A549 (cell line): ENCODE measurements at regions of chr14 and their contacts with region 1.

Region 1: DNA sequence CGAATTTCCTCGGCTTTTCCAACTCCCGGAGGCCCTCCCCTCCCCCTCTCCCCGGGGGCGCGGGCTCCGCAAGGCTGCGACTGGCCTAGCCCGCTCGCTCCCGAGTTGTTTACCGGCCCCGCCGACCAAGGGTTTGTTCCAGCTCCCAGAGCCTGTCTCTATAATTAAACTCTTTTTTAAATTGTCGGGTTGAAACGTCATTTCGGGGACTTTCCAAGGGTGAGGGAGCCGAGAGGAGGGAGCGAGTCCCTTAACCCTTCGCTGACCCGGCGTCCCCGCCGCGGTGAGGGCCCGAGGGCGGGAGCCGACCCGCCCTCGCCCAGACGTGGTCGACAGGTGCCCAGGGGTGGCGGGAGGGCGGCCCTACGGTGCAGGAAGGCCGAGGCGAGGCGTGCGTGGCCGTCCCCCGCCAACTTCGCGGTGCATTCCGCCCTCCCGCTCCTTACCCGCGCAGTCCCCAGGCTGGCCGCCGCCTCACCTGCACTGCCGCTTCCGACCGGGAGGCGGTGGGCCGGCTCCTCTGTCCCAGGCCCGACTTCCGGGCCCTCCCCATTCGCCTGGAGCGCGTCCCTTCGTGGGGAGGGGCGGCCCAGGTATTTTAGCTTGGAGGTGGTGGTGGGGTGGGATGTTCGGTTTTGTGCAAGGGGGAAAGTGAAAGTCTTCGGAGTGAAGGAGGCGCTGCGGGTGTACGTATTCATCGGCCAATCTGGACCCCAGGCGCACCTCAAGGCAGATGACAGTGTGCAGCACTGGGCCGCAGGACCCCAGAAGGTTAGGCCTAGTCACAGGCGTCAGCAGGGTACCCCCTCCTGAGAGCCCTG is 2.9 kb upstream of the ZFP36L1 start:
- DNase-seq: peak in 1 of 2 experiments; percentile 90
- ATAC-seq: peak; percentile 60 to 75
- H3K4me3 ChIP-seq: peak overlapping the region; percentile 95
- H3K27ac ChIP-seq: peak overlapping the region; percentile 99 to 100
- H3K4me1 ChIP-seq: peaks cover 21% of the 10 kb centered on the region
- CTCF ChIP-seq: peak; percentile 38; the same call in 2 of the 3 replicates
- EP300 ChIP-seq: no peak; a peak in 1 of 5 replicates
- POLR2A ChIP-seq: peak; percentile 83
- RAD21 ChIP-seq: no peak; a peak in 4 of 5 replicates

Region 2: GRCh38 chr14:68089146-68089731 is 706.6 kb before region 1 on chr14:
- CTCF ChIA-PET with region 1: no interaction called
- POLR2A ChIA-PET with region 1: interaction called, 11 read pairs
- DNase-seq: peak; percentile 67 to 88
- ATAC-seq: peak; percentile 95 to 97
- H3K4me3 ChIP-seq: no peak overlapping the region
- H3K27ac ChIP-seq: peak overlapping the region; percentile 83
- H3K4me1 ChIP-seq: peaks cover 23% of the 10 kb centered on the region
- CTCF ChIP-seq: no peak
- EP300 ChIP-seq: no peak
- POLR2A ChIP-seq: no peak
- RAD21 ChIP-seq: no peak

Region 3: DNA sequence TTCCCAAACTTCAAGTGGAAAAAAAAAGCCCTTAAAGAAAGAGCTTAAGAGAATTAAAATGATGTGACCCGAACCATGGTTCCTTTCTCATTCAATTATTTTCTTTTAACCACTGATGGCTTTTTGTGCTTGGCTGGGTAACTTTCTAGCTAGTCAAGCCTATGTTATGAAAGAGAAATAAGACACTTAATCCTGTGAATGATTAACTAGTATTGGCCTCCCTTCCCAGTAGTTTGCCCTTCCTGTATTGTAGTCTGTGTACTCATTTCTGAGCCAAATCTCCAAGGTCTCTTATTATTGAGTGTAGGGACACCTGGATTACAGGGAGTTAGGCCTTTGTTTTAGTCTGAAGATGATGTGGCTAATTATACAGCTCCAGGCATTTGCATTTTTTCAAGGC is 623.2 kb before region 1 on chr14:
- CTCF ChIA-PET with region 1: no interaction called
- POLR2A ChIA-PET with region 1: interaction called, 18 read pairs
- DNase-seq: peak; percentile 65 to 93
- ATAC-seq: peak; percentile 92 to 94
- H3K4me3 ChIP-seq: no peak overlapping the region
- H3K27ac ChIP-seq: peak overlapping the region; percentile 88 to 94
- H3K4me1 ChIP-seq: peaks cover 73% of the 10 kb centered on the region
- CTCF ChIP-seq: no peak
- EP300 ChIP-seq: peak; percentile 30 to 45; a peak in 2 of 5 replicates
- POLR2A ChIP-seq: no peak
- RAD21 ChIP-seq: peak; percentile 15 to 35; a peak in 4 of 5 replicates

Region 4: GRCh38 chr14:68248481-68249255 is 547.1 kb before region 1 on chr14:
- CTCF ChIA-PET with region 1: interaction called, 117 read pairs
- POLR2A ChIA-PET with region 1: interaction called, 142 read pairs
- DNase-seq: peak; percentile 61 to 86
- ATAC-seq: peak; percentile 81 to 84
- H3K4me3 ChIP-seq: no peak overlapping the region
- H3K27ac ChIP-seq: peak overlapping the region; percentile 95 to 97
- H3K4me1 ChIP-seq: peaks cover 76% of the 10 kb centered on the region
- CTCF ChIP-seq: peak; percentile 83
- EP300 ChIP-seq: no peak
- POLR2A ChIP-seq: no peak
- RAD21 ChIP-seq: peak; percentile 93 to 97

Region 5: DNA sequence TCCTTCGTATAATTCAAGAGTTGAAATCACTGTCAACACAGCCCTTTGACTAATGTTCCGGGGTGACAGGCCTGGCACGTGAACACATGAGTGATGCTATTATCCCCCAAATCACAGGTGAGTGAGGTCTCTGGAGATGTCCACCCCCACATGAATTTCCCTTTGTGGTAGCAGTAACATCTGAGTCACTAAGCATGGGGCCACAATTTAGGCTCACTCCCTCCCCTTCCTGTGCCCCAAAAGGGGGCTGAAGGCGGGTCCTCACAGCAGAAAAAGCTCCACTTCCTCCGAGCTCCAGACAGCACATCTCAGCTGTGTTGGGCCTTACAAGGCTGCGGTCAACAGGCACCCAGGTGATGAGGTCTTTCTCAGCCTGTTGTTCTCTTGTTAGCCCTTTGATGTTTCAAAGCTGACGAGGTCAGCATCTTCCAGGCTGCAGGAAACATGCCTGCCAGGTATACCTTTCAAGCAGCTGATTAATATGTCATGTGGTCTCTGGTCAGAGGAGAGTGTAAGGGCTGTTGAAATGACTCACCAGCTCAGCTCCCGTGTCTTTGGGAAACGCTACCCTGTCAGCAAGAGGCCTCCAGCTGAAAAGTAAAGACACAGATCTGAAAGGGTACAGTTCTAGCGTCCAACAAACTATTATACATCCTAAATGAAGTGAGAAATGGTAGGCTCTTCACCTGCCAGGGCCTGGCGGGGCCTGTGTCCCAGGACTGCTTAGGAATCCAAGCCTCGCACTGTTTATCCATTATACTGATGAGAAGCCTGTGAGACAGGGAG is 110.2 kb before region 1 on chr14:
- CTCF ChIA-PET with region 1: no interaction called
- POLR2A ChIA-PET with region 1: interaction called, 16 read pairs
- DNase-seq: no peak
- ATAC-seq: no peak
- H3K4me3 ChIP-seq: no peak overlapping the region
- H3K27ac ChIP-seq: peak overlapping the region; percentile 86 to 94
- H3K4me1 ChIP-seq: peaks cover 63% of the 10 kb centered on the region
- CTCF ChIP-seq: no peak
- EP300 ChIP-seq: no peak
- POLR2A ChIP-seq: no peak
- RAD21 ChIP-seq: no peak

Region 6: DNA sequence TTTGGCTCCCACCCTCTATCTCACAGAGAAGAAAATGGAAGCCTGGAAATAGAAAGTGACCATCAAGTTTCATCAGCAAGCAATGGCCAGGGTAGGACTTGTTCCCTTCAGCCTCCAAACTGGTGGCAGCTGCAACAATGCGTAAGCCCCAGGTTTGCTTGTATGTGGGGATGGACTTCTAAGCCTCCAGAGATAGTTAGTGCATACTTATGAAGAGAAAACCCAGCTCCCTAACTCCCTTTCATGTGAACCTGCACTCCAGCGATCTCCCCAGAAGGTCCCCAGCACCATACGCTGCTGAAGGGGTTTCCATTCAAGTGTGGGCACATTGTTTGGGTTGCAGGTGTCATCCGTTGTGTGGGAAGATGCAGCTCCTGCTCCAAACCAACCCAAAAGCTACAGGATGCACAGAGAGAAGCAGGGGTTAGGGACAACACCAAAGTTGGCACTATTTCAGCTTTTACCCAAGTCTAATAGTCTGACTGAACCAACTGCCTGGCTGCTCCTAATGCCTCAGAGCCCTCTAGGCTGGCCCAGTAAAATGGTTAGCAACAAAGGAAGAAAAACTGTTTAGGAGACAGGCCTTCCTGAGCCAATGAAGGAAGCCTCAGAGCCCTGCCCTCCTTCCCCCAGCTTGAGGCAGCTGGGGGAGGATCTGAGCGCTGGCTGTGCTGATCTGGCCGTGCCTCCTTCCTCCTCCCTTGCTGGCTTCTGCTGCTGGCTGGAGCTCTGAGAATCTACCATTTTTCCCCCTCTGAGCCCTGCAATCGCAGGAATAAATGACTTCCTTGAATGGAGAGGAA is 15.2 kb before region 1 on chr14:
- CTCF ChIA-PET with region 1: interaction called, 6 read pairs
- POLR2A ChIA-PET with region 1: interaction called, 37 read pairs
- DNase-seq: peak in 1 of 2 experiments; percentile 53
- ATAC-seq: no peak
- H3K4me3 ChIP-seq: no peak overlapping the region
- H3K27ac ChIP-seq: peak overlapping the region; percentile 94 to 100
- H3K4me1 ChIP-seq: peaks cover 71% of the 10 kb centered on the region
- CTCF ChIP-seq: no peak
- EP300 ChIP-seq: no peak
- POLR2A ChIP-seq: no peak
- RAD21 ChIP-seq: no peak

Region 7: GRCh38 chr14:68884031-68885030 is 88.5 kb after region 1 on chr14:
- CTCF ChIA-PET with region 1: no interaction called
- POLR2A ChIA-PET with region 1: no interaction called
- DNase-seq: peak; percentile 79 to 87
- ATAC-seq: peak; percentile 87 to 88
- H3K4me3 ChIP-seq: no peak overlapping the region; the same call in 2 of the 3 replicates
- H3K27ac ChIP-seq: peak overlapping the region; percentile 87 to 90
- H3K4me1 ChIP-seq: peaks cover 34% of the 10 kb centered on the region
- CTCF ChIP-seq: no peak
- EP300 ChIP-seq: peak in 1 of 2 experiments; percentile 32; a peak in 1 of 5 replicates
- POLR2A ChIP-seq: no peak
- RAD21 ChIP-seq: peak; percentile 1 to 11; a peak in 1 of 5 replicates

Region 8: GRCh38 chr14:68961781-68962584 is 166.2 kb after region 1 on chr14:
- CTCF ChIA-PET with region 1: no interaction called
- POLR2A ChIA-PET with region 1: interaction called, 10 read pairs
- DNase-seq: peak in 1 of 2 experiments; percentile 70
- ATAC-seq: peak; percentile 48 to 54; a peak in 5 of 6 replicates
- H3K4me3 ChIP-seq: no peak overlapping the region
- H3K27ac ChIP-seq: peak overlapping the region in 1 of 2 experiments; percentile 46; a peak in 2 of 6 replicates
- H3K4me1 ChIP-seq: peaks cover 100% of the 10 kb centered on the region
- CTCF ChIP-seq: no peak
- EP300 ChIP-seq: no peak
- POLR2A ChIP-seq: no peak
- RAD21 ChIP-seq: no peak